ENCODE measurements at regions of chrX and their contacts with region 1.

Region 1: GRCh38 chrX:48904626-48905025 is 6.8 kb downstream of the SLC35A2 start:
- DNase-seq: no peak
- H3K4me3 ChIP-seq: no peak overlapping the region
- H3K27ac ChIP-seq: no peak overlapping the region
- H3K4me1 ChIP-seq: no peaks in the 10 kb centered on the region
- H3K27me3 ChIP-seq: no peaks in the 10 kb centered on the region
- CTCF ChIP-seq: no peak
- POLR2A ChIP-seq: no peak

Region 2: DNA sequence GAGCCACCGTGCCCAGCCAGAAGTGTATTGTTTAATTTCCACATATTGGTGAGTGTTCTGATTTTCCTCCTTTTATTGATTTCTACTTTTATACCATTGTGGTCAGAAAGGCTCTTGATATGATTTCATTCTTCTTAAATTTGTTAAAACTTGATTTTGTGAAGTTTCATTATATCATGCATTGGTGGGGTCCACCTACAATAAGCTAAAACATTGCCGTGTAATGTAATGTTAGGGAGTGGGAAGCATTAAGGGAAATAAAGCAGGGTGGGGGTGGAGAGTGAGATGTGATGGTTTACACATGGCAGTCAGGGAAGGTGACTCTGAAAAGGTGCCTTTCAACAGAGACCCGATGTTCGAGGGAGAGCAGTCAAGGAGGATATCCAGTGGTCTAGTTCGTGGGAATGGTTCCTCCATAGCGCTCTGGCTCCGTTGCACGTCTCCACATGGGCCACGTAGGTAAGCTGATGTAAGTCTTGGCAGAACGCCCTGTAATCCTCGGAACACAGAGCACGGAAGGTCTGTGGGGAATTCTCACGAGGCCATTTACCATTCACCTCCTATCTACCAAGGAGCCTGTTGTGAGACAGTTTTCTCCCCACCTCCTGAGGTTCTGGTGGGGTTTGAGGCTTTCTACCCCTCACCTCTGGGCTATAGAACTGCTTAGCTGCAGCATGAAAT is 315.0 kb before region 1 on chrX:
- intact Hi-C with region 1: no loop called
- DNase-seq: no peak
- H3K4me3 ChIP-seq: no peak overlapping the region
- H3K27ac ChIP-seq: peak overlapping the region in 2 of 5 donors; percentile 10 to 73
- H3K4me1 ChIP-seq: no peaks in the 10 kb centered on the region
- H3K27me3 ChIP-seq: no peaks in the 10 kb centered on the region
- CTCF ChIP-seq: no peak
- POLR2A ChIP-seq: no peak

Region 3: GRCh38 chrX:48663241-48663640 is 241.4 kb before region 1 on chrX:
- intact Hi-C with region 1: no loop called
- DNase-seq: no peak
- H3K4me3 ChIP-seq: no peak overlapping the region
- H3K27ac ChIP-seq: no peak overlapping the region
- H3K4me1 ChIP-seq: no peaks in the 10 kb centered on the region
- H3K27me3 ChIP-seq: peaks cover 5% of the 10 kb centered on the region
- CTCF ChIP-seq: no peak
- POLR2A ChIP-seq: no peak

Region 4: GRCh38 chrX:48794911-48795501 is 109.6 kb before region 1 on chrX:
- intact Hi-C with region 1: loop called in 1 of 2 experiments (anchors 10 kb)
- DNase-seq: no peak
- H3K4me3 ChIP-seq: no peak overlapping the region
- H3K27ac ChIP-seq: no peak overlapping the region
- H3K4me1 ChIP-seq: no peaks in the 10 kb centered on the region
- H3K27me3 ChIP-seq: no peaks in the 10 kb centered on the region
- CTCF ChIP-seq: no peak
- POLR2A ChIP-seq: no peak